K562 (cell line): ENCODE measurements at regions of chr12 and their contacts with region 1.

Region 1: DNA sequence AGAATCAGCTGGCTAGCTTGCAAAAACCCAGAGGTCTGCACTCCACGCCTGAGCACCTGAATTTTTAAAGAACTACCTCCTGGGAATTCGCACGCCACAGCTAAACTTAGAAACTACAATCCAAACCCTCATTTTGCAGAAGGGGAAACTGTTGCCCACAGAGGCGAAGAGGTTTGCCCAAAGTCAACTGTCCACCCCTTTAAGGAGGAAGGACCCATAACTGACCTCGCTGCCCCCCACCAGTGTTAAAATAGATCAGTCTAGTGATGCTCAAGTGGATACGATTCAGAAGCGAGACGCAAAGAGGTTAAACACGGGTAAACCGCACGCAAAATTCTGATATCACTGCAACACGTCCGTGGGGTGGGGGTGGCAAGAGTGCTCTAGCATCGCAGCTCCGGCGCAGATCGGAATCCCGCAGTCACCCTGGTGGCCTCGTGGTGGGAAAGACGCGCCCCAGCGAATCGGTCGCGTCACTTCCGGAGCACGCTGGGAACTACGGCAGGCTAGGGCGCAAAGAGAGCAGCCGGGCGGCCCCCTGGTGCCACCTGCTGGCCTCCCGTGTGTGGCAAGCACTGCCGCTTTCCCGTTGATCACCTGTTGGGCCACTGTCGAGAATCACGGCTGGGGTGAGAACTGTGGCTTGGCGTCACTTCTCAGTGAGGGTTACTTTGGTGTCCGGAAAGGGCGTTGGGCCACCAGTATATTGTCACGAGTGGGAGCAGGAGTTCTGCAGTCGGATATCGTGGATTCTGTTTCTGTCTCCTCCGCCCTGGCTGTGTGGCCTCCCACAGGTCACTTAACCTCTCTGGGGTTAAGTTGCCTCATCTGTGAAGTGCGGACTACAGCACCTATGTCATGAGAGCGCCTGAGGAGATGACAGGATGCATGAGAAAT is at the start of gene ALKBH2:
- DNase-seq: peak; percentile 86 to 96 (median 88)
- ATAC-seq: peak; percentile 77
- H3K4me3 ChIP-seq: peak within 1 kb of the TSS; percentile 47
- H3K27ac ChIP-seq: peak within 1 kb of the TSS; percentile 75
- H3K4me1 ChIP-seq: peaks cover 6 to 41% of the 10 kb centered on the region in 2 experiments; a peak in 4 of 5 replicates
- H3K27me3 ChIP-seq: no peaks in the 10 kb centered on the region
- CTCF ChIP-seq: peak; percentile 95 to 98 (median 98)
- EP300 ChIP-seq: no peak
- POLR2A ChIP-seq: peak; percentile 85
- RAD21 ChIP-seq: peak; percentile 89 to 93
- polyA plus RNA-seq, gene ALKBH2: 5.9 to 13.6 TPM

Region 2: GRCh38 chr12:108826101-108826806 is 267.0 kb before region 1 on chr12:
- CTCF ChIA-PET with region 1: no interaction called
- POLR2A ChIA-PET with region 1: interaction called, 3 read pairs
- in situ Hi-C with region 1: no loop called
- intact Hi-C with region 1: loop called (anchors 10 kb)
- DNase-seq: peak in 3 of 4 experiments; percentile 47 to 60 (median 47)
- ATAC-seq: peak; percentile 35; the same call in 2 of the 3 replicates
- H3K4me3 ChIP-seq: no peak overlapping the region
- H3K27ac ChIP-seq: no peak overlapping the region
- H3K4me1 ChIP-seq: peaks cover 14 to 36% of the 10 kb centered on the region in 2 experiments; a peak in 4 of 5 replicates
- H3K27me3 ChIP-seq: peaks cover 2 to 6% of the 10 kb centered on the region in 2 experiments; a peak in 3 of 5 replicates
- CTCF ChIP-seq: no peak
- EP300 ChIP-seq: no peak
- POLR2A ChIP-seq: no peak
- RAD21 ChIP-seq: no peak

Region 3: DNA sequence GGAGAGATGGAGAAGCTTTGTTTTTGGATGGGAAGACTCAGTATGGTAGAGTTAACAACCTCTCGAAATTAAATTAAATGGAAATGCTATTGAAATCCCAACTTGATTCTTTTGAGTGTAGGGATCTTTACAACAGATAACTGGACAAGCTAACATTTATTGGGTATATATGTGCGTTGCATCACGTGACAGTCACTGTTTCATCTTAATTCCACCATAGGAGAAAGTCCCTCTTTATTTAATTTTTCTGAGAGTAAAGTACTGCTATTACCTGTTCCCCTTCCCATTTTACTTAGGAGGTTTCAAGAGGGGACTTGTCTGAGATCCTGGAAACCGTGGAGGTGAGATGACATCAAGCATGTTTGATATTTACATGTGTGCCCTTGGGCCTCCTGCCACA is 224.5 kb before region 1 on chr12:
- CTCF ChIA-PET with region 1: no interaction called
- POLR2A ChIA-PET with region 1: no interaction called
- in situ Hi-C with region 1: no loop called
- intact Hi-C with region 1: no loop called
- DNase-seq: no peak
- ATAC-seq: no peak
- H3K4me3 ChIP-seq: no peak overlapping the region
- H3K27ac ChIP-seq: no peak overlapping the region
- H3K4me1 ChIP-seq: no peaks in the 10 kb centered on the region
- H3K27me3 ChIP-seq: no peaks in the 10 kb centered on the region; a peak in 1 of 5 replicates
- CTCF ChIP-seq: no peak
- EP300 ChIP-seq: no peak
- POLR2A ChIP-seq: no peak
- RAD21 ChIP-seq: no peak

Region 4: DNA sequence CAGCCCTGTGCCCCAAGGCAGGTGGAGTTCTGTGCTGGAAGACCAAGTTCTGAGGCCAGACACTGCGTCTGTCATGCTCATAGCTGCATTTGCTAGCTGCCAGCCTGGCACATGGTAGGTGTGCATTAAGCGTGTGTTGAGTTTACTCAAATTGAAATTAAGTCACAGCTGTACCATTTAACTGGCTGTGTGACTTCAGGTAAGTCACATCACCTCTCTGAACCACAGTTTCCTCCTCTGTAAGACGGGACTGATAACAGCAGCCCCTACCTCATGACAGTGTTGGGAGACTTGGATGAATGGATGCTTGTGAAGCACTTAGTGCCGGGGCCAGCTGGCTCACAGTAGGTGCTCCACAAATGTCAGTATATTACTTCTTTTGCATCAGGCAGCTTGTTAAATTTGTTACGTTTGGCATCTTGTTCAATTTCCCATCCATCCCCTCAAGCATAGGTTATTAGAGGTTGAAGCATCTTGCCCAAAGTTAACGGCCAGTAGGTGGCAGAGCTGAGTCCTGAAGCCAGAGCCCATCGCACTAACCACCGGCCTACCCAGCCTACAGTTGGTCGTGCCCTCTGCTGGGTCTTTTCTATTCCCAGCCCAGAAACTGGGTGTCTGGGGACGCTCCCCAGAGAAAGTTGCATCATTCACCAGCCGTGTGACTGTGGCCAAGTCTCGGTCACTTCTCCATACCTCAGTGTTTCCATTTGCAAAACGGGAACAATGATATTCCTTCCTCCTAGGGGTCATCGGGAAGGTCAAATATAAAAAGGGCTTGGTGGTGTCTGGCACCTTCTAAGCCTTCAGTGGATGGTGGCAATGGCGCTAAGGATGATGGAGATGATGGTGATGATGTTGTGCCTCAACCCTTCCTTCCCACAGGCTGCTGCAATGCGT is 208.9 kb before region 1 on chr12:
- CTCF ChIA-PET with region 1: no interaction called
- POLR2A ChIA-PET with region 1: no interaction called
- in situ Hi-C with region 1: no loop called
- intact Hi-C with region 1: loop called (anchors 1 kb)
- DNase-seq: peak; percentile 55 to 72 (median 68)
- ATAC-seq: peak; percentile 93
- H3K4me3 ChIP-seq: no peak overlapping the region
- H3K27ac ChIP-seq: no peak overlapping the region
- H3K4me1 ChIP-seq: no peaks in the 10 kb centered on the region; a peak in 1 of 5 replicates
- H3K27me3 ChIP-seq: peaks cover 21 to 52% of the 10 kb centered on the region in 2 experiments
- CTCF ChIP-seq: peak; percentile 77 to 82 (median 80)
- EP300 ChIP-seq: no peak
- POLR2A ChIP-seq: no peak
- RAD21 ChIP-seq: peak; percentile 28 to 64; a peak in 3 of 4 replicates

Region 5: GRCh38 chr12:108950991-108951739 is 142.1 kb before region 1 on chr12:
- CTCF ChIA-PET with region 1: no interaction called
- POLR2A ChIA-PET with region 1: no interaction called
- in situ Hi-C with region 1: no loop called
- intact Hi-C with region 1: loop called (anchors 2 kb)
- DNase-seq: peak; percentile 48 to 79 (median 68)
- ATAC-seq: peak; percentile 93
- H3K4me3 ChIP-seq: no peak overlapping the region
- H3K27ac ChIP-seq: no peak overlapping the region
- H3K4me1 ChIP-seq: no peaks in the 10 kb centered on the region; a peak in 1 of 5 replicates
- H3K27me3 ChIP-seq: peaks cover 4 to 21% of the 10 kb centered on the region in 2 experiments; a peak in 4 of 5 replicates
- CTCF ChIP-seq: peak; percentile 80 to 88 (median 86)
- EP300 ChIP-seq: no peak
- POLR2A ChIP-seq: no peak
- RAD21 ChIP-seq: peak; percentile 76 to 86

Region 6: DNA sequence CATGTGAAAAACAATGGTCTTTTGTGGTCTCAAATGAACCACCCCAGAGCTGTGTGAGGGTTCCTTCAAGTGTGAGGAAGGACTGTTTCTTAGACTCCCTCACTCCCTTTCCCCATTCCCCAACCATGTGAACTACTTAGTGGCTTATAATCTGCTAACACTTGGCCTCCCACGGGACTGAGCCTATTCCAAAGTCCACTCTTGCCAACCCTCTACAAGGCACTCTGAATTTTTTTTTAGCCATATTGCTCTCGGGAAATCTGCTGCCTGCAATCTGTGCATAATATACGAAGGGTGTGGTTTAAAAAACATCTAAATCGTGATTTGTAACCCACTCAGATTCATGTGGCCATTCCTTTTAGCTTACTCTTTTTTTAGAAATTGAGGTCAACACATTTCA is 75.0 kb before region 1 on chr12:
- CTCF ChIA-PET with region 1: no interaction called
- POLR2A ChIA-PET with region 1: no interaction called
- in situ Hi-C with region 1: no loop called
- intact Hi-C with region 1: loop called (anchors 10 kb)
- DNase-seq: no peak
- ATAC-seq: no peak
- H3K4me3 ChIP-seq: no peak overlapping the region
- H3K27ac ChIP-seq: no peak overlapping the region
- H3K4me1 ChIP-seq: peaks cover 0 to 5% of the 10 kb centered on the region in 2 experiments; a peak in 2 of 5 replicates
- H3K27me3 ChIP-seq: peaks cover 2 to 23% of the 10 kb centered on the region in 2 experiments; a peak in 3 of 5 replicates
- CTCF ChIP-seq: no peak
- EP300 ChIP-seq: no peak
- POLR2A ChIP-seq: no peak
- RAD21 ChIP-seq: no peak